ENCODE measurements at regions of chr1 and their contacts with region 1.

Region 1: GRCh38 chr1:198681831-198682759 is 43.3 kb downstream of the PTPRC start:
- DNase-seq: peak; percentile 66 to 75
- H3K4me3 ChIP-seq: peak overlapping the region; percentile 32; the same call in 1 of the 2 replicates
- H3K27ac ChIP-seq: peak overlapping the region; percentile 55
- H3K4me1 ChIP-seq: peaks cover 11% of the 10 kb centered on the region
- H3K27me3 ChIP-seq: no peaks in the 10 kb centered on the region
- CTCF ChIP-seq: no peak

Region 2: DNA sequence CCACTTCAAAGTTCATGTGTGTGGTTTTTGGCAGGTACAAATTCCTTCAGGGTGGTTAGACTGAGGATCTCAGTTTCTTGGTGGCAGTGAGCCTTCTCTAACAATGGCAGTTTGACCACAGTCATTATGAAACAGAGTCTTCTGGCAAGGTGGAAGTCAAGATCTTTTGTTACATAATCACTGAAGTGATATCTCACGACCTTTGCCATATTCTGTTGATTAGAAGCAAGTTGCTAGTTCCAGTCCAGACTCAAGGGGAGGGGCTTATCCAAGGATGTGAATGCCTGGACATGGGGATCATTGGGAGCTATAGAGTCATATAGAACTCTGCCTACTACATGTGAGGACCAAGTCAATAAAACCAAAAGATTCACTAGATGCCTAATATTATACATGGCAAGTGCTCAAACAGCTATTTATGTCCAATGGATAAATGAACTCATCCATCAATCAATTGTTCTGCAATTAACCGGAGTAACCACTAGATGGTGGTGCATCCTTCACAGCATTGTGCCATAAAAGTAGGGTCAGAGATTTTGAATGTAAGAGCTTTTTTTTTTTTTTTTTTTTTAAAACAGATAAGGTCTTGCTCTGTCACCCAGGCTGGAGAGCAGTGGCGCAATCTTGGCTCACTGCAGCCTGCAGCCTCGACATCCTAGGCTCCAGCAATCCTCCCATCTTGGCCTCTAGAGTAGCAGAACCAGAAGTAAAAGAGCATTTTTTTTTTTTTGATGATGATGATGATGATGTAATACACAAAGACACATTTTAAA is 1282.2 kb before region 1 on chr1:
- CTCF ChIA-PET with region 1: interaction called, 3 read pairs
- POLR2A ChIA-PET with region 1: no interaction called
- intact Hi-C with region 1: loop called (anchors 10 kb)
- DNase-seq: peak; percentile 23 to 58
- H3K4me3 ChIP-seq: no peak overlapping the region
- H3K27ac ChIP-seq: no peak overlapping the region
- H3K4me1 ChIP-seq: no peaks in the 10 kb centered on the region
- H3K27me3 ChIP-seq: no peaks in the 10 kb centered on the region
- CTCF ChIP-seq: peak; percentile 71

Region 3: GRCh38 chr1:197614916-197615692 is 1067.0 kb before region 1 on chr1:
- CTCF ChIA-PET with region 1: no interaction called
- POLR2A ChIA-PET with region 1: no interaction called
- intact Hi-C with region 1: loop called (anchors 5 kb)
- DNase-seq: peak in 1 of 2 experiments; percentile 17
- H3K4me3 ChIP-seq: no peak overlapping the region
- H3K27ac ChIP-seq: no peak overlapping the region
- H3K4me1 ChIP-seq: no peaks in the 10 kb centered on the region
- H3K27me3 ChIP-seq: no peaks in the 10 kb centered on the region
- CTCF ChIP-seq: peak; percentile 67

Region 4: GRCh38 chr1:197924516-197925123 is 757.5 kb before region 1 on chr1:
- CTCF ChIA-PET with region 1: no interaction called
- POLR2A ChIA-PET with region 1: no interaction called
- intact Hi-C with region 1: loop called (anchors 5 kb)
- DNase-seq: peak in 1 of 2 experiments; percentile 18
- H3K4me3 ChIP-seq: no peak overlapping the region
- H3K27ac ChIP-seq: no peak overlapping the region
- H3K4me1 ChIP-seq: no peaks in the 10 kb centered on the region
- H3K27me3 ChIP-seq: no peaks in the 10 kb centered on the region
- CTCF ChIP-seq: peak; percentile 84

Region 5: GRCh38 chr1:198449727-198450433 is 232.2 kb before region 1 on chr1:
- CTCF ChIA-PET with region 1: no interaction called
- POLR2A ChIA-PET with region 1: no interaction called
- intact Hi-C with region 1: loop called (anchors 5 kb)
- DNase-seq: peak in 1 of 2 experiments; percentile 37
- H3K4me3 ChIP-seq: peak overlapping the region; percentile 21; the same call in 1 of the 2 replicates
- H3K27ac ChIP-seq: peak overlapping the region; percentile 79
- H3K4me1 ChIP-seq: peaks cover 21% of the 10 kb centered on the region
- H3K27me3 ChIP-seq: no peaks in the 10 kb centered on the region
- CTCF ChIP-seq: no peak

Region 6: GRCh38 chr1:198577444-198577843 is 104.7 kb before region 1 on chr1:
- CTCF ChIA-PET with region 1: no interaction called
- POLR2A ChIA-PET with region 1: no interaction called
- intact Hi-C with region 1: no loop called
- DNase-seq: peak in 1 of 2 experiments; percentile 44
- H3K4me3 ChIP-seq: no peak overlapping the region
- H3K27ac ChIP-seq: no peak overlapping the region
- H3K4me1 ChIP-seq: no peaks in the 10 kb centered on the region
- H3K27me3 ChIP-seq: no peaks in the 10 kb centered on the region
- CTCF ChIP-seq: no peak

Region 7: DNA sequence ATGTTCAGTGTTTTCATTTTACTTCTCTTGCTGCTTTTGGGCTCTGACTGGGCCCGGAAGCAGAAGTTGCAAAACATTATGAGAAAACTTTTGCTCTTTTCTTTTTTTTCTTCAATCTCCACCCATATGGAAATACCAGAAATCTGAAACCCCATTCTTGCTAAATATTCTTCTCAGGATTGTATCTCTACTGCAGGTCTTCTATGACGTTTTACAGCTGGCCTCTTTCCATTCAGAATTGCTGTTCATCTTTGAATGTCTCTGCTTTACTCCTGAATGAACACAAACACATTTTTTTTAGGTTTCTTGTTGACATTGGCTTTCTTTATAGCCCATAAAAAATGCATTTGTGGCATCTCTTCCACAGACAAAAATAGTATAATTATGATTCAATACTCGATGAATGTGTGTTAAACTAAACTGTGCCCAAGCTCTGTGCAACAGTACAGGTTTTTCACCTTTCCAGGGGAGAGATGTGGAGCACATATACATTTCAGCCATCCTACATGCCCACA is 24.5 kb before region 1 on chr1:
- CTCF ChIA-PET with region 1: no interaction called
- POLR2A ChIA-PET with region 1: interaction called, 21 read pairs
- intact Hi-C with region 1: loop called (anchors 1 kb)
- DNase-seq: peak; percentile 45 to 93
- H3K4me3 ChIP-seq: no peak overlapping the region
- H3K27ac ChIP-seq: peak overlapping the region; percentile 70
- H3K4me1 ChIP-seq: peaks cover 28% of the 10 kb centered on the region
- H3K27me3 ChIP-seq: no peaks in the 10 kb centered on the region
- CTCF ChIP-seq: no peak

Region 8: DNA sequence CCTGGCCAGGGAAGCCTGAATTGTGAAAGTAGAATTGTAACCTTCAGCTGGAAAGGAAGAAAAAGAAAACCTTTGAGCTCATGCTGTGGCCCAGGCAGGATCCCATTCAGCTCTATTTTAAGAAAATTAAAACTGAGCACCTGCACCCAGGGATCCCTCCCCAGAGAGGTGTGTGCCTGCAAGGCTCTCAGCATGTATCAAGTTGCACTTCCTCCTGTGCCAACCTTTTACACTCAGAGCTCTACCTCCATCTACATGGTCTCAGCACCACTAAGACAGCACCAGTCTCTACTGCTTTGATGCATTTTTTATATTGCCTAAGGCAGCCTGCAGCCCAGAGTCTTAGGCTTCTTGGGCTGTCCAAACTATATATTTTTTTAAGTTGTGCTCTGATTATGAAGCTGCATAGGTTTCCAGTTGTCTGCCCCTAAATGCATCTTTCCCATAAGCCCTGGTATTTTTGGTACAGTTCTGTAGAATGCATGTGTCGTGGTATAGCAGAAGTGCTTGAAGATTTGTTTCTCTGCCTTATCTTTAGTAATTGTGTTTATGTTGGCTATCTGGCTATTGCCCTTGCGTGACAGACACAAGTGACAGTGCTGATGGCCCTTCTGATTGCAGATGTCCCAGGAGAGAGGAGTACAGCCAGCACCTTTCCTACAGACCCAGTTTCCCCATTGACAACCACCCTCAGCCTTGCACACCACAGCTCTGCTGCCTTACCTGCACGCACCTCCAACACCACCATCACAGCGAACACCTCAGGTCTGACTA is 19.9 kb after region 1 on chr1:
- CTCF ChIA-PET with region 1: no interaction called
- POLR2A ChIA-PET with region 1: no interaction called
- intact Hi-C with region 1: no loop called
- DNase-seq: no peak
- H3K4me3 ChIP-seq: no peak overlapping the region
- H3K27ac ChIP-seq: no peak overlapping the region
- H3K4me1 ChIP-seq: no peaks in the 10 kb centered on the region
- H3K27me3 ChIP-seq: no peaks in the 10 kb centered on the region
- CTCF ChIP-seq: no peak